Naive thymus-derived CD4-positive, alpha-beta T cell (primary cell): ENCODE measurements at regions of chr2 and their contacts with region 1.

Region 1: GRCh38 chr2:62787386-62787785 is 81.9 kb downstream of the EHBP1 start:
- DNase-seq: no peak
- ATAC-seq: no peak
- H3K4me3 ChIP-seq: no peak overlapping the region
- H3K4me3 Mint-ChIP-seq: no peak overlapping the region
- H3K27ac ChIP-seq: no peak overlapping the region
- H3K27ac Mint-ChIP-seq: no peak overlapping the region
- H3K4me1 ChIP-seq: no peaks in the 10 kb centered on the region
- H3K4me1 Mint-ChIP-seq: peaks cover 0 to 10% (median 4%) of the 10 kb centered on the region in 7 donors
- H3K27me3 ChIP-seq: no peaks in the 10 kb centered on the region
- H3K27me3 Mint-ChIP-seq: no peaks in the 10 kb centered on the region

Region 2: GRCh38 chr2:62658891-62659290 is 128.5 kb before region 1 on chr2:
- CTCF ChIA-PET with region 1: no interaction called
- POLR2A ChIA-PET with region 1: interaction called, 13 read pairs
- intact Hi-C with region 1: no loop called
- DNase-seq: no peak
- ATAC-seq: no peak
- H3K4me3 ChIP-seq: no peak overlapping the region
- H3K4me3 Mint-ChIP-seq: no peak overlapping the region
- H3K27ac ChIP-seq: no peak overlapping the region
- H3K27ac Mint-ChIP-seq: no peak overlapping the region
- H3K4me1 ChIP-seq: no peaks in the 10 kb centered on the region
- H3K4me1 Mint-ChIP-seq: peaks cover 0 to 3% (median 0%) of the 10 kb centered on the region in 7 donors
- H3K27me3 ChIP-seq: no peaks in the 10 kb centered on the region
- H3K27me3 Mint-ChIP-seq: peaks cover 0 to 4% (median 0%) of the 10 kb centered on the region in 5 donors

Region 3: GRCh38 chr2:62826141-62826540 is 38.8 kb after region 1 on chr2:
- CTCF ChIA-PET with region 1: no interaction called
- POLR2A ChIA-PET with region 1: no interaction called
- intact Hi-C with region 1: no loop called
- DNase-seq: no peak
- ATAC-seq: no peak
- H3K4me3 ChIP-seq: no peak overlapping the region
- H3K4me3 Mint-ChIP-seq: no peak overlapping the region
- H3K27ac ChIP-seq: no peak overlapping the region
- H3K27ac Mint-ChIP-seq: no peak overlapping the region
- H3K4me1 ChIP-seq: no peaks in the 10 kb centered on the region
- H3K4me1 Mint-ChIP-seq: no peaks in the 10 kb centered on the region
- H3K27me3 ChIP-seq: no peaks in the 10 kb centered on the region
- H3K27me3 Mint-ChIP-seq: no peaks in the 10 kb centered on the region

Region 4: GRCh38 chr2:63424329-63425078 is 637.1 kb after region 1 on chr2:
- CTCF ChIA-PET with region 1: no interaction called
- POLR2A ChIA-PET with region 1: no interaction called
- intact Hi-C with region 1: loop called (anchors 1 to 10 kb)
- DNase-seq: peak in 6 of 9 donors; percentile 2 to 28 (median 14)
- ATAC-seq: peak; percentile 60
- H3K4me3 ChIP-seq: no peak overlapping the region
- H3K4me3 Mint-ChIP-seq: no peak overlapping the region
- H3K27ac ChIP-seq: no peak overlapping the region
- H3K27ac Mint-ChIP-seq: no peak overlapping the region
- H3K4me1 ChIP-seq: no peaks in the 10 kb centered on the region
- H3K4me1 Mint-ChIP-seq: peaks cover 0 to 3% (median 0%) of the 10 kb centered on the region in 7 donors
- H3K27me3 ChIP-seq: no peaks in the 10 kb centered on the region
- H3K27me3 Mint-ChIP-seq: peaks cover 0 to 2% (median 0%) of the 10 kb centered on the region in 5 donors

Region 5: DNA sequence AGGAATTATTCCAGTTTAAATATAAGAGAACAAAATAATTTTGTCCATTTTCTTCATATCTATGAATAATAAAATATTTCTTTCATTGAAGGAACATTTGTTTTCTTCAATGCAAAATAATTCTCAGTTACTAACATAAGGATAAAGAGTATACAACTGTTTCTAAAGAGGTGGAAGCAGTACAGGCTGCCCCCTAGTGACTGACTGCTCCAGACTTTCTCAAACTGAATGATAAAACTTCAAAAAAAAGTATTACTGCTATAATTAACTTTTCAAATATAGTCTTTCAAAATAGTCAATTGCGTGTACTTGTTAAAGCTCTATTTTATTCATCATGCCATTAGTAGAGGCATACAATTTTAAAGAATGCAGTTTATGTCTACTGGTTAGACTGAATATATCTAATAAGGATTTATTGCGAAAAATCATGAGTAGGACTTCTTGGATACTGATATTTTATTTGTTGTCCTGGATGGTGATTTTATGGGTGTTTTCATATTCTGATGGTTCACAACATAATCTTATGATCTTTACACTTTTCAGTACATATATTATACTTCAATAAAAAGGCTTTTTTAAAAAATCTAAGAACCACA is 700.8 kb after region 1 on chr2:
- CTCF ChIA-PET with region 1: no interaction called
- POLR2A ChIA-PET with region 1: no interaction called
- intact Hi-C with region 1: loop called in 1 of 2 experiments (anchors 5 kb)
- DNase-seq: no peak
- ATAC-seq: no peak
- H3K4me3 ChIP-seq: no peak overlapping the region
- H3K4me3 Mint-ChIP-seq: no peak overlapping the region
- H3K27ac ChIP-seq: no peak overlapping the region
- H3K27ac Mint-ChIP-seq: no peak overlapping the region
- H3K4me1 ChIP-seq: no peaks in the 10 kb centered on the region
- H3K4me1 Mint-ChIP-seq: peaks cover 0 to 3% (median 0%) of the 10 kb centered on the region in 7 donors
- H3K27me3 ChIP-seq: no peaks in the 10 kb centered on the region
- H3K27me3 Mint-ChIP-seq: no peaks in the 10 kb centered on the region

Region 6: GRCh38 chr2:63544017-63544627 is 756.7 kb after region 1 on chr2:
- CTCF ChIA-PET with region 1: no interaction called
- POLR2A ChIA-PET with region 1: no interaction called
- intact Hi-C with region 1: loop called in 1 of 2 experiments (anchors 2 kb)
- DNase-seq: peak in 1 of 9 donors; percentile 7
- ATAC-seq: no peak
- H3K4me3 ChIP-seq: no peak overlapping the region
- H3K4me3 Mint-ChIP-seq: no peak overlapping the region
- H3K27ac ChIP-seq: no peak overlapping the region
- H3K27ac Mint-ChIP-seq: peak overlapping the region in 1 of 9 donors; percentile 21
- H3K4me1 ChIP-seq: no peaks in the 10 kb centered on the region
- H3K4me1 Mint-ChIP-seq: peaks cover 0 to 4% (median 0%) of the 10 kb centered on the region in 7 donors
- H3K27me3 ChIP-seq: no peaks in the 10 kb centered on the region
- H3K27me3 Mint-ChIP-seq: no peaks in the 10 kb centered on the region